Activated T-helper 1 cell treated with anti-CD3 and anti-CD28 coated beads, Interleukin-12 subunit alpha, Interleukin-12 subunit beta, Interleukin-2, Interleukin-4 antibody, amounts not matched to agents 30 ng/mL and 10 ng/mL and 1 ng/mL, durations not matched to agents 14 hours and 24 hours and 36 hours (primary cell): ENCODE measurements at regions of chr2 and their contacts with region 1.

Region 1: DNA sequence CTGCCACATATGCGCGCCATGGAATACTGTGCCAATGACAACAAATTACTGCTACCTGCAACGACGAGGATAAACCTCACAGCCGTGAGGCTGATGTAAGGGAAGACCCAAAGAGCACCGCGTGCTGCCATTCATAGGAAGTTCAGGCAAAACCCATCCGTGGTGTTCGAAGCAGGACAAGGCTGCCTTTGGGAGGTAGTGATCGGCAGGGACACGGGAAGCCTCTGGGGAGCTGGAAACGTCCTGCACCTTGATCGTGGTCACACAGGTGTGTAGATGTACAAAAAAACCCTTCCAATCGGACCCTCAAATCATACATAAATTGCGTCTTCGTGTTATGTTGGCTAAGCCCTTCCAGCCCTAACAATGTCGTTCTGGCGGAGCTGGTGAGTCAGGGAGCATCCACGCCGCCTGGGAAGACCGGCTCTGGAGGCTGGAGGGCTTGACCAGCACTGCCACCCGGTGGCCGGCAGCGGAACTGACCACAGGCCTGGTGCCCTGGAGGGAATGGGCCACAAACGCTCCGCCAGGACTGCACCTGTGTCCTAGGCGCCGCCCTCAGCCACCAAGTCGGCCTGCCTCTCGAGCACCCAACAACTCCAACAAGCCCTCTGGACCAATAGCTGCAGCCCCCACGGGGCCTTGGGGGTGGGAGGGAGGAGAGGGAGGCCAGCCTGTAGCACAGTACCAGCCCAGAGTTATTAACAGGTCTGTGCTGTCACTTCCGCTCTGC is 4.1 kb upstream of the NEURL3 start:
- DNase-seq: peak; percentile 46
- H3K4me3 Mint-ChIP-seq: peak overlapping the region; percentile 26
- H3K27ac Mint-ChIP-seq: no peak overlapping the region
- H3K4me1 Mint-ChIP-seq: peaks cover 57% of the 10 kb centered on the region
- H3K27me3 Mint-ChIP-seq: peaks cover 3% of the 10 kb centered on the region

Region 2: DNA sequence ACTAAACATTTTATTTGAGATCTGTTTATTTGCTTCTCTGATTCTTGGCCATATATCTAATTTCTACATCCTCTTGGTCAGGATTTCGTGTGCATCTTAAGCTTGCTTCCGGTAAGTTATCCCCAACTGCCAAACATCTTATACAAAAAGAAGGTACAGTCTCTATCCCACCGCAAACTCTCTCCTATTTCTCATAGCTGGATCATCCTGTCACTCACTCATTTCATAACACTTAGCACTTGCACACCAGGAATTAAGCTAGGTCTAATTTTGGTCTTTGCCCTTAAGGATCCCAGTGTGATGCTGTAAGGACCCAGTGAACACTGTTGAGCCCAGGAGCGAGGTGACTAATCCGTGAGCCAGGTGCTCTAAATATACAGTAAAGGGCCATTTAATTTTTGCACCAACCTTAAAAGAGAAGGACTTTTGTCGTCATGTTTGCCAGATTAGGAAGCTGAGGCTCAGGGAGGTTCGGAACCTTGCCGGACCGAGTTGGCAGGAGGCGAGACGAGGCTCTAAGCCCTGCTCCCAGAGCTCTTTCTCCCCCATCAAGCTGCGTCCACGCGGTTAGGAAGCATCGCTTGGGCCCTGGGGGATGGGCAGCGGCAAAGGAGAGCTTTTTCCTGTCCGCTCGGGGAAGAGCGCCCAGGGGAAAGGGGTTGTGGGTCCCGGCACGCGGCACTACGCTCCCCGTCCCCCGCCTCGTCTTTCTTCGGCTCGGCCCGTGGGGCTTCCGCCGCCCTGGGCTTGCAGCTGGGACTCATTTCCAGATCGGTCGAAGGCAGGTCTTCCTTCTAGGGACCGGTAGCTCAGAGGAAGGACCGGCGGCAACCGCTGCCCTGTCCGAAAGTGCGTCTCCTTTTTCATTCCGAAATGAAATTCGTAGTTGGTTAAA is 188.3 kb before region 1 on chr2:
- intact Hi-C with region 1: loop called (anchors 1 kb)
- DNase-seq: peak; percentile 26
- H3K4me3 Mint-ChIP-seq: peak overlapping the region; percentile 88
- H3K27ac Mint-ChIP-seq: peak overlapping the region; percentile 85
- H3K4me1 Mint-ChIP-seq: peaks cover 63% of the 10 kb centered on the region
- H3K27me3 Mint-ChIP-seq: no peaks in the 10 kb centered on the region

Region 3: DNA sequence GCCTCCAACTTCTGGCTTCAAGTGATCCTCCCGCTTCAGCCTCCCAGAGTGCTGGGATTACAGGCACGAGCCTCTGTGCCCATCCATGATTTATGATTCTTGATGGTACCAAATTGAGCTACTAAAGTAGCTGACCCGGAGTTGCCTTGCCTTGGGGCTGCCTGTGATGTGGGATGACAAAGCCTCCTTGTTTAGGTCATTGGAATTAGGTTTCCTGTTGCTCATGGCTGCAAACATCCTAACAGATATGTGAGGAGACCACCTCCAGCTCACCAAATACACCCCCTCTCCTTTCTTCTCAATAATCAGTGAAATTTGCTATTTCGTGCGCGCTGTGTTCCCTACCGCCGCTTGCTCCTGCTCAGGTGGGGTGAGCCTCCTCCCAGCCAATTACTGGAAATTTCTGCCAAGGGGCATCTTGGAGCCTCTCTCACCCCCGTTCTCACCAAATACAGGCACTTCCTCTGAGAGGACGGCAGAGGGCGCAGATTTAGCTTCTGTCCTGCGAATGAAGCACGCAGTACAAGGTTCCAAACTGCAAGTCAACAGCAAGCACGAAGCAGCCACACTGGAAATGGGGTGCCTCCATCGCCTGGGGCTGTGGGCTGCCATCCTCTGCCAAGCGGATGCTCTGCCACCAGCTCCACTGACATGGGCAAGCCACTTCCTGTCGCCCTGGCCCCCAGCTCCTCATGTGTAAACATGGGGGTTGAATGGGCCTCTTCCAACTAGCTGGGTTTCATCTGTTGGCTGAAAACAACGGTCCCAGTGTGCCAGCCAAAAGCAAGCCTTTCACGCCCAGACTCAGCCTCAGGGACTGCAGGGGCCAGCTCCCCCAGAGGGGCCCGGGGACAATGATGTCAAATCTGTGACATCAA is 102.0 kb before region 1 on chr2:
- intact Hi-C with region 1: loop called (anchors 1 kb)
- DNase-seq: peak; percentile 58
- H3K4me3 Mint-ChIP-seq: no peak overlapping the region
- H3K27ac Mint-ChIP-seq: peak overlapping the region; percentile 72
- H3K4me1 Mint-ChIP-seq: peaks cover 22% of the 10 kb centered on the region
- H3K27me3 Mint-ChIP-seq: peaks cover 5% of the 10 kb centered on the region

Region 4: GRCh38 chr2:96485751-96486651 is 23.3 kb before region 1 on chr2:
- intact Hi-C with region 1: loop called (anchors 1 kb)
- DNase-seq: peak; percentile 88
- H3K4me3 Mint-ChIP-seq: peak overlapping the region; percentile 92
- H3K27ac Mint-ChIP-seq: peak overlapping the region; percentile 96
- H3K4me1 Mint-ChIP-seq: peaks cover 63% of the 10 kb centered on the region
- H3K27me3 Mint-ChIP-seq: peaks cover 5% of the 10 kb centered on the region

Region 5: GRCh38 chr2:96527286-96528005 is 18.2 kb after region 1 on chr2:
- intact Hi-C with region 1: loop called (anchors 1 kb)
- DNase-seq: peak; percentile 70
- H3K4me3 Mint-ChIP-seq: peak overlapping the region; percentile 69
- H3K27ac Mint-ChIP-seq: peak overlapping the region; percentile 97
- H3K4me1 Mint-ChIP-seq: peaks cover 93% of the 10 kb centered on the region
- H3K27me3 Mint-ChIP-seq: no peaks in the 10 kb centered on the region